Right lobe of liver (tissue), 6 donors: ENCODE measurements at regions of chr18 and their contacts with region 1.

Region 1: DNA sequence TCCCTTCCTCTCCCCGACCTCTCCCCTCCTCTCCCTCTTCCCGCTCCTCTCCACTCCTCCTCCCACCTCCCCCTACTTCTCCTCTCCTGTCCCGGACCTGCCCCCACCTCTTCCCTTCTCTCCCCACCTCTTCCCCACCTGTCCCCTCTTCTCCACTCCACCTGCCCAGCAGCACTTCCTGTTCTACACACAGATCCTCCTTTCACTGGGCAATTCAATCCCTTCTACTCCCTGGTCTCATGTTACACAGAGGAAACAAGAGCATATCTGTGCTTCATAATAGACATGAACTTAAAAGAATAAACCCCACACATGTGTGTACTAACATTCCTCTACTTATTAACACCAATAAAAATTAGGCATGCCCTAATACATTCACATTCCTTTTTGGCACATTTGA is 34.8 kb downstream of the TIMM21 start:
- DNase-seq: no peak
- ATAC-seq: peak in 1 of 4 donors; percentile 13
- H3K4me3 ChIP-seq: no peak overlapping the region
- H3K27ac ChIP-seq: no peak overlapping the region
- H3K4me1 ChIP-seq: no peaks in the 10 kb centered on the region
- H3K27me3 ChIP-seq: no peaks in the 10 kb centered on the region
- CTCF ChIP-seq: no peak
- POLR2A ChIP-seq: no peak

Region 2: GRCh38 chr18:74126684-74127482 is 56.2 kb before region 1 on chr18:
- intact Hi-C with region 1: loop called in 1 of 2 experiments (anchors 10 kb)
- DNase-seq: no peak
- ATAC-seq: no peak
- H3K4me3 ChIP-seq: no peak overlapping the region
- H3K27ac ChIP-seq: no peak overlapping the region
- H3K4me1 ChIP-seq: no peaks in the 10 kb centered on the region
- H3K27me3 ChIP-seq: no peaks in the 10 kb centered on the region
- CTCF ChIP-seq: no peak
- POLR2A ChIP-seq: no peak

Region 3: DNA sequence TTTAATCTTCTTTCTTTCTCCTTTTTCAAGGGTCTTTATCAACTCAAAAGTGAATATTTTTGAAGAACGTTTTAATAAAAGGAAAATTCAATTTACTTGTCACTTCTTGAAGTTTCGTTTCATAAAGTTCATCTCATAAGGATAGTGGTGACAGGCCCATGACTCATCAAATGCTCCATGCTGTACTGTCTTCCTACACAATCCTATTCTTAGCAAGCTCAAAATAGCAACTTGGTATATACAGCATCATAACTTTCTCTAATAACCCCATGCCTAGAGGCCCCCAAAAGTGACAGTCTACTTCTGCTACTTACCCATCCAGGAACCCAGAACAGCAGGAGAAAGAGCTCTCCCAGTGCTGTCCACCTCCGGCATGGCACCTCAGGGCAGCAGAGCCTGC is 43.2 kb before region 1 on chr18:
- intact Hi-C with region 1: no loop called
- DNase-seq: no peak
- ATAC-seq: no peak
- H3K4me3 ChIP-seq: no peak overlapping the region
- H3K27ac ChIP-seq: no peak overlapping the region
- H3K4me1 ChIP-seq: no peaks in the 10 kb centered on the region
- H3K27me3 ChIP-seq: no peaks in the 10 kb centered on the region
- CTCF ChIP-seq: no peak
- POLR2A ChIP-seq: no peak

Region 4: DNA sequence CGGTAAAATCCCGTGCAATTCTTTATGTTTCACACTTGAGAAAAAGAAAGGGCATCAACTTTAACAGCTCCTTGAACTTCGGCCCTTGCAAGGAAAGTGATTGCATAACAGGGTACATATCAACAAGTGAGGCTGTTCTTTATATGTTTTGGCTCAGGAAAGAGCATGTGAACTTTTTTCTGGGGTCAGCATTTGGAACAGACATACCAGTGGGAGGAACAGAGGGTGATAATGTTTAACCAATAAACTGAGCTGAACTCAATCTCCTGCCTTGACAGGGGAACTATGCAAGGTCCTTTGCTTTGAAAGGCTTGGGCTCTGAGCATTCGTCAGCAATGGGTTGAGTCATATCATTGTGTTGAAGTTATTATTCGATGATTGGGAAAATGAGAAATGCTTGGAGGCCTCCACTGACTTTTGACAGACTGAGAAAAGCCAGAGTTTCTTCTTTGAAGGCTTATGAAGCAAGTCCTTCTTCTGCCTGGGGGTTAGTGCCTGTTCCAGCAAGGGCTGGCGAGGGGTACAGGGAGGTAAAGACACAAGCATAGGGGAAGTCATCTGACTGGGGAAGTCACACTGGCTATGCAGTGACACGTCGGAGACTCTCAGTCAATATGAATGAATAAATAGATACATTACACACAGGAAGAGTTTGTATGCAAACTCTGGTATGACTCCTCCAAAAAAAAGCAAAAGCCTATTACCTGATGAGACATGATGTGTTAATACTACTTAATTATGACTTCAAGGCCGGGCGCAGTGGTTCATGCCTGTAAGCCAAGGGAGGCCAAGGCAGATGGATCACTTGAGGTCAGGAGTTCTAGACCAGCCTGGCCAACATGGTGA is 51.4 kb after region 1 on chr18:
- intact Hi-C with region 1: no loop called
- DNase-seq: peak in 1 of 3 donors; percentile 80
- ATAC-seq: peak; percentile 68 to 87 (median 82)
- H3K4me3 ChIP-seq: peak overlapping the region in 1 of 3 donors; percentile 19
- H3K27ac ChIP-seq: peak overlapping the region; percentile 79 to 98 (median 90)
- H3K4me1 ChIP-seq: peaks cover 0 to 69% (median 36%) of the 10 kb centered on the region in 4 donors
- H3K27me3 ChIP-seq: no peaks in the 10 kb centered on the region
- CTCF ChIP-seq: no peak
- POLR2A ChIP-seq: no peak

Region 5: GRCh38 chr18:74331404-74331803 is 148.3 kb after region 1 on chr18:
- intact Hi-C with region 1: loop called in 1 of 2 experiments (anchors 10 kb)
- DNase-seq: peak in 1 of 3 donors; percentile 49
- ATAC-seq: peak; percentile 98 to 100 (median 99)
- H3K4me3 ChIP-seq: no peak overlapping the region
- H3K27ac ChIP-seq: peak overlapping the region in 1 of 3 donors; percentile 11
- H3K4me1 ChIP-seq: peaks cover 0 to 10% (median 3%) of the 10 kb centered on the region in 4 donors
- H3K27me3 ChIP-seq: no peaks in the 10 kb centered on the region
- CTCF ChIP-seq: peak; percentile 65 to 70 (median 68)
- POLR2A ChIP-seq: no peak

Region 6: GRCh38 chr18:74476140-74476539 is 293.0 kb after region 1 on chr18:
- intact Hi-C with region 1: loop called in 1 of 2 experiments (anchors 10 kb)
- DNase-seq: no peak
- ATAC-seq: no peak
- H3K4me3 ChIP-seq: no peak overlapping the region
- H3K27ac ChIP-seq: no peak overlapping the region
- H3K4me1 ChIP-seq: peaks cover 0 to 31% (median 3%) of the 10 kb centered on the region in 4 donors
- H3K27me3 ChIP-seq: no peaks in the 10 kb centered on the region
- CTCF ChIP-seq: peak in 3 of 4 donors; percentile 27 to 36 (median 35)
- POLR2A ChIP-seq: no peak